ENCODE measurements at regions of chr14 and their contacts with region 1.

Region 1: DNA sequence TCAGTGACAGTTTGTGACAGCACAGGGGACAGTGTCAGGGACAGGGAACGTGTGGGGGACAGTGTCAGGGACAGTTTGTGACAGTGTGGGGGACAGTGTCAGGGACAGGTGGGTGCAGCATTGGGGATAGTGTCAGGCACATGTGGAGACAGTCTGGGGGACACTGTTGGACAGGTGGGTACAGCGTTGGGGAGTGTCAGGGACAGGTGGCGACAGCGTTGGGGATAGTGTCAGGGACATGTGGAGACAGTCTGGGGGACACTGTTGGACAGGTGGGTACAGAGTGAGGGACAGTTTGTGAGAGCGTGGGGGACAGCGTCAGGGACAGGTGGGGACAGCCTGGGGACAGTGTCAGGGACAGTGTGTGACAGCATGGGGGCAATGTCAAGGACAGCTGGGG is 140.0 kb downstream of the TMEM121 start:
- DNase-seq: no peak
- ATAC-seq: no peak

Region 2: GRCh38 chr14:105793836-105794235 is 127.4 kb after region 1 on chr14:
- intact Hi-C with region 1: no loop called
- DNase-seq: no peak
- ATAC-seq: no peak

Region 3: DNA sequence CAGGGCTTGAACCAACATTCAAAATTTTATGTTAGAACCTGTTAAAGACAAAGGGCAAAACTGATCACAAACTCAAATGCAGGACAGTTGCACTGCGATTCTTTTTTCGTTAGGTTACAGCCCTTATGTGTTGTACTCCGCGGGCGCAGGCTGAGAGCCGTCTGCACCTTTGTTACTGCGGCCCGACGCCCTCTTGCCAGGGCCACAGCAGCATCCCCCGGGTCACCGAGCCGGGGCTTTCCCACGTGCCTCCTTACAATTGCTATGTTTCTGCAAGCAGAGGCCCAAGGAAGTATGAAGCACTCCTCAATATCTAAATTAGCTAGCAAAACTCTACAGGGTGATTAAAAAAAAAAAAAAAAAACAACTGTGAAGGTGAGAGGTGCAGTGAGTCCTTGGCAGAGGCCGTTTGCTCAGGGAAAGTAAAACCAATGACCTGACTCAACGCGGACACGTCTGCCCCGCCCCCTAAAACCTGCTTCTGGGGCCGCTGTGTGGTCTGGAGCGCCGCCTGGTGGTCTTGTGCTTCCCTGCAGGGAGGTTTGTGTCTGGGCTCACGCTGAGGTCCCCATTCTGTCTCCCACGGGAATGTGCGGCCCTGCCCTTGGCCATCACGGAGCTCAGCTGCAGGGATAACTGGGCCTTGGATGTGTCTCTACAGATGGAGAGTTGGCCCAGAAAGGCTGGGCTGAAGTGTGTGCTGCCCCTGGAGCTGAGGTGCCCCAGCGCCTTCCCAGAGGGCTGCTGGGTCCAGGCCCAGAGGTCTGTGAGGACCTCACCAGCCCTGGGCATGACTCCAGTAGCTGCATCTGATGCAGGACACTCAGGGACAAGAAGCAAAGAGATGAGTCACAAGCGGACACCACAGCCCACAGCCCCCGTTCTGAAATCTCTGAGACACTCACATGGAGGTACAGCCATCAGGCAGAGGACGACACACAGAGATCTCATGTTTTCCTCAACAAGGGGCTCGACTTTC is 278.5 kb after region 1 on chr14:
- intact Hi-C with region 1: loop called (anchors 10 kb)
- DNase-seq: no peak
- ATAC-seq: peak; percentile 54